Right cardiac atrium (tissue), 5 donors: ENCODE measurements at regions of chr7 and their contacts with region 1.

Region 1: GRCh38 chr7:122803323-122803722 is 82.9 kb downstream of the CADPS2 start:
- DNase-seq: peak in 1 of 3 donors; percentile 45
- ATAC-seq: peak; percentile 50 to 77
- H3K4me3 ChIP-seq: no peak overlapping the region
- H3K27ac ChIP-seq: peak overlapping the region; percentile 4
- H3K4me1 ChIP-seq: no peaks in the 10 kb centered on the region
- H3K27me3 ChIP-seq: no peaks in the 10 kb centered on the region

Region 2: DNA sequence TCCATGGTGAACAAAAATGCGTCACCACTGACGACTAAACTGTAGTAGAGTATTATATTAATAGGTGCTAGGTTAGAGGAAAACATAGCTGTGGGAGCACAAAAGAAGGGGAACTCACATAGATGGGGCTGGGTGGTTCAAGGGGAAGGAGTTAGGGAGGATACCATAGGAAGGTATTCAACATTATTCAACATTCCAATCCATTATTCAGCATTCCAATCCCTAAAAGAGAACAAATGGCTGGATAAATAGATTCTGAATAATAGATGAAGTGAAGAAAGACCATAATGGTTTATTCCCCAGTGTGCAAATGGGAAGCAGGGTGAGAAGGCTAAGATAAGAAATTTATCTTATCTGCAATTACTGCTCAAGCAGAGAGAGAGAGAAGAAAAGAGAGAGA is 720.7 kb before region 1 on chr7:
- intact Hi-C with region 1: no loop called
- DNase-seq: no peak
- ATAC-seq: no peak
- H3K4me3 ChIP-seq: no peak overlapping the region
- H3K27ac ChIP-seq: no peak overlapping the region
- H3K4me1 ChIP-seq: no peaks in the 10 kb centered on the region
- H3K27me3 ChIP-seq: no peaks in the 10 kb centered on the region

Region 3: GRCh38 chr7:122550545-122550944 is 252.8 kb before region 1 on chr7:
- intact Hi-C with region 1: no loop called
- DNase-seq: no peak
- ATAC-seq: no peak
- H3K4me3 ChIP-seq: no peak overlapping the region
- H3K27ac ChIP-seq: no peak overlapping the region
- H3K4me1 ChIP-seq: no peaks in the 10 kb centered on the region
- H3K27me3 ChIP-seq: no peaks in the 10 kb centered on the region

Region 4: GRCh38 chr7:122886357-122887081 is 83.2 kb after region 1 on chr7 and contains the start of gene CADPS2:
- intact Hi-C with region 1: loop called in 1 of 4 experiments (anchors 10 kb)
- DNase-seq: peak; percentile 90 to 94 (median 93)
- ATAC-seq: peak; percentile 97 to 98
- H3K4me3 ChIP-seq: peak within 1 kb of the TSS; percentile 97
- H3K27ac ChIP-seq: peak within 1 kb of the TSS; percentile 97
- H3K4me1 ChIP-seq: no peaks in the 10 kb centered on the region
- H3K27me3 ChIP-seq: no peaks in the 10 kb centered on the region
- total RNA-seq, gene CADPS2: 10.4 to 14.1 (median 11.4) TPM

Region 5: GRCh38 chr7:123154231-123154860 is 351.0 kb after region 1 on chr7:
- intact Hi-C with region 1: loop called in 2 of 4 experiments (anchors 5 to 10 kb)
- DNase-seq: peak; percentile 59 to 79 (median 61)
- ATAC-seq: peak; percentile 81 to 86
- H3K4me3 ChIP-seq: no peak overlapping the region
- H3K27ac ChIP-seq: no peak overlapping the region
- H3K4me1 ChIP-seq: no peaks in the 10 kb centered on the region
- H3K27me3 ChIP-seq: no peaks in the 10 kb centered on the region